ENCODE measurements at regions of chr2 and their contacts with region 1.

Region 1: DNA sequence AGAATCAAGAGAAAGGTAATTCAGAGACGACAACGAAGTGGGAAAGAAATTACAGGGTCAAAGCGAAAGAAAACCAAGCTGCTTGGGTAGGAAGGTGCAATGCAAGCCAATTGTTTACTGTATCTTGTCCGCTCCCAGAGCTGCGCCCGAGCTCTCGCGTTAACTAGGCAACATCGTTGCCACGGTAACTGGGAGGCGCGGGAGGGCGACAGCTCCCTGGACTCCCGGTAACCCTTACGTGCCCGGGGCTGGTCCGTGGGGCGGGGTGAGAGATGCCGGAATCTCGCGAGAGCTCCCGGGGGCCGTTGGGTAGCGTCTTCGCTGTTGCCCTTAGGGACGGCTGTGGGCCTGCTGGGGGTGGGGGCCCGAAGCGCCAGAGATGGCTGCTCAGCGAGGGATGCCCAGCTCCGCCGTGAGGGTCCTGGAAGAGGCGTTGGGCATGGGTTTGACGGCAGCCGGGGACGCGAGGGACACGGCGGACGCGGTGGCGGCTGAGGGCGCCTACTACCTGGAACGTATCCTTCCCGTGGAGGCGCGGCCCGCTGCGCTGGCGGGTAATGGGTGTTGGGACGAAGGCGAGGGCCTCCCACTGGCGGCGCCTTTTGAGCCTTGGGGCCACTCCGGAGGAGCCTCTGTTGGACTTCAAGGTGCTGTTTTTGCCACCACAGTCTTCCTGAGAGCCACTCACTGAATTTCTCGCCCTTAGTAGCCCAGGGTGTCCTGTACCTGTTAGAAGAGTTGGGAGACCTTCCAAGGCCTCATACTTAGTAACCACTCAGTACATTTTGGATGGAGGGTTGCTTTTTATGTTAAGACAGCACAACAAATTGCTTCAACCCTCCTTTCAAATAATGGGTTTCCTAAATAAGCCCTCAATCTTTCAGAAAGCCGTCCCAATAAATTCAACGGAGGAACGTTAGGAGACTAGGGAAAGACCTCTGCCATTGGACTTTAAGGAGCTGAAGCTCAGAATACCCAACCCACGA is at the start of gene SPAG16:
- DNase-seq: peak; percentile 94 to 96
- ATAC-seq: peak; percentile 99 to 100 (median 100)
- H3K4me3 ChIP-seq: peak within 1 kb of the TSS; percentile 43 to 94 (median 86)
- H3K27ac ChIP-seq: peak within 1 kb of the TSS in 9 of 10 donors; percentile 23 to 78 (median 65)
- H3K4me1 ChIP-seq: peaks cover 0 to 32% (median 20%) of the 10 kb centered on the region in 9 donors
- H3K27me3 ChIP-seq: no peaks in the 10 kb centered on the region
- CTCF ChIP-seq: no peak
- total RNA-seq, gene SPAG16: 14.4 to 28.3 (median 19.7) TPM

Region 2: GRCh38 chr2:213125646-213126347 is 158.6 kb before region 1 on chr2:
- intact Hi-C with region 1: no loop called
- DNase-seq: no peak
- ATAC-seq: no peak
- H3K4me3 ChIP-seq: no peak overlapping the region
- H3K27ac ChIP-seq: no peak overlapping the region
- H3K4me1 ChIP-seq: peaks cover 0 to 19% (median 0%) of the 10 kb centered on the region in 9 donors
- H3K27me3 ChIP-seq: no peaks in the 10 kb centered on the region
- CTCF ChIP-seq: no peak

Region 3: DNA sequence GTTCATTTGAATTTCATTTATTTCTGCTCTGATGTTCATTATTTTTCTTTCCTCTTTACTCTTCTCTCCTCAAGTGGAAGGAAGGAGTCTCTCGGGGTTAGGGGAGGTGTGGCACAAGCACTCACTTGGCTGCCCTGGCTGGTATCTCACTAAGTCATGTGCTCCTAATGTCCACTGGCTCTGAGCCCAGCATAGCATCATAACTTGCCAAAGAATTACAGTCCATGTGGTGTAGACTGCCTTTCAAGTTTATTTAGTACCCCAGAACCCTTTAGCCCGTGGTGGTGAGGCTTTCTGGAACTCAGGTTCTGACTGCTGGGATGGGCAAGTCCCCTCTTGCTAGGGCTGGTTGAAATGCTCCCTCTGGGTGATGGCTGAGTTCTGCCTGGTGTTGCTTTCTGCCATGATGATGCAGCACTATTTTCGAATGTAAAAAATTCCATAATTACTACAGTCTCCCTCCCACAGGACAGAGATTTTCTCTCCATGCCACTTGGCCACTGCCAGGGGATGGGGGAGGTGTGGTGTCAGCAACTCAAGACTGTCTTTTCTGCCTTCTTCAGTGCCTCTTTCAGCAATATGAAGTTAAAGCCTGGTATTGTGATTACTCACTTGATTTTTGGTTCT is 22.0 kb after region 1 on chr2:
- intact Hi-C with region 1: loop called in 1 of 10 experiments (anchors 1 kb)
- DNase-seq: peak; percentile 13 to 33
- ATAC-seq: peak in 6 of 8 donors; percentile 35 to 79 (median 64)
- H3K4me3 ChIP-seq: no peak overlapping the region
- H3K27ac ChIP-seq: no peak overlapping the region
- H3K4me1 ChIP-seq: peaks cover 0 to 6% (median 0%) of the 10 kb centered on the region in 9 donors
- H3K27me3 ChIP-seq: no peaks in the 10 kb centered on the region
- CTCF ChIP-seq: no peak

Measured in heart right ventricle (tissue), 16 donors.